OCI-LY7 (cell line): ENCODE measurements at regions of chr1 and their contacts with region 1.

Region 1: DNA sequence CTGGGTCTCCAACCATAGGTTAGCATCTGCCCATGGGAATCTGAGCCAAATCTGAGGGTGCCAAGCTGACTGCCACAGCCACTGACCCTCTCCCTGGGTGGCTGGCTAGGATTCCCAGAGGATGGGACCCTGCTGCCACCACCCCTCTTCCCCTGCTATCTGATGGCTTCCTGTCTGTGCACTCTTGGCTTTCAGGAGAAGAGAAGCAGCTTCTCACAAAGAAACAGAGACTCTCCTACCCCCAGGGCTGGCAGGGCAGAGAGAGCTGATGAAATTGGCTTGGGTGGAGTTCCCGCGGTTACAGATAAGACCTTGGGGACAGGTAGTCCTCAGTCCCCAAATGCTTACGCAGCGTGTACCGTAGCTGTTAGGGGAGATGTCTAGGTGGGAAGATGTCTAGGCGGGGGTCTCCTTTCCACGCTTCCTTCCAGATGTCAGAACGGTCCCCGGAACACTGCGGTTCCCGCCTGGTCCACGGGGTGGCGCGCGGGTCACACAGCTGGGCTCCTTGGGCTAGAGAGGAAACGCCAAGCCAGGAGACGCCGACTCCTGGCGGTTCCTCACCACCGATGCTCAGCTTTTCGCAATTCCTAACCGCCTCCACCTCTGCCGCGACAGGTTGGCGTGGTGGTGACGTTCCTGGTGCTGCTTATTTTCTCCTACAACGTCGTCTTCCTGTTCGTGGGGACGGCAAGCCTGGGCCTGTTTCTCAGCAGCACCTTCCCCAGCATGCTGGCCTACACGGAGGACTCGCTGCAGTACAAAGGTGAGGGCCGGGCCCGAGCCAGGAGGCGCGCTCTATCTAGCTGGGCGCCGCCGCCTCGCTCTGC is 40.1 kb downstream of the ELK4 start:
- DNase-seq: peak; percentile 88
- H3K4me3 ChIP-seq: peak overlapping the region; percentile 66
- H3K27ac ChIP-seq: peak overlapping the region; percentile 93
- H3K4me1 ChIP-seq: peaks cover 65% of the 10 kb centered on the region
- CTCF ChIP-seq: peak; percentile 96

Region 2: GRCh38 chr1:205344066-205344928 is 247.4 kb before region 1 on chr1:
- CTCF ChIA-PET with region 1: no interaction called
- POLR2A ChIA-PET with region 1: no interaction called
- intact Hi-C with region 1: no loop called
- DNase-seq: no peak
- H3K4me3 ChIP-seq: no peak overlapping the region
- H3K27ac ChIP-seq: no peak overlapping the region
- H3K4me1 ChIP-seq: peaks cover 17% of the 10 kb centered on the region
- CTCF ChIP-seq: no peak

Region 3: DNA sequence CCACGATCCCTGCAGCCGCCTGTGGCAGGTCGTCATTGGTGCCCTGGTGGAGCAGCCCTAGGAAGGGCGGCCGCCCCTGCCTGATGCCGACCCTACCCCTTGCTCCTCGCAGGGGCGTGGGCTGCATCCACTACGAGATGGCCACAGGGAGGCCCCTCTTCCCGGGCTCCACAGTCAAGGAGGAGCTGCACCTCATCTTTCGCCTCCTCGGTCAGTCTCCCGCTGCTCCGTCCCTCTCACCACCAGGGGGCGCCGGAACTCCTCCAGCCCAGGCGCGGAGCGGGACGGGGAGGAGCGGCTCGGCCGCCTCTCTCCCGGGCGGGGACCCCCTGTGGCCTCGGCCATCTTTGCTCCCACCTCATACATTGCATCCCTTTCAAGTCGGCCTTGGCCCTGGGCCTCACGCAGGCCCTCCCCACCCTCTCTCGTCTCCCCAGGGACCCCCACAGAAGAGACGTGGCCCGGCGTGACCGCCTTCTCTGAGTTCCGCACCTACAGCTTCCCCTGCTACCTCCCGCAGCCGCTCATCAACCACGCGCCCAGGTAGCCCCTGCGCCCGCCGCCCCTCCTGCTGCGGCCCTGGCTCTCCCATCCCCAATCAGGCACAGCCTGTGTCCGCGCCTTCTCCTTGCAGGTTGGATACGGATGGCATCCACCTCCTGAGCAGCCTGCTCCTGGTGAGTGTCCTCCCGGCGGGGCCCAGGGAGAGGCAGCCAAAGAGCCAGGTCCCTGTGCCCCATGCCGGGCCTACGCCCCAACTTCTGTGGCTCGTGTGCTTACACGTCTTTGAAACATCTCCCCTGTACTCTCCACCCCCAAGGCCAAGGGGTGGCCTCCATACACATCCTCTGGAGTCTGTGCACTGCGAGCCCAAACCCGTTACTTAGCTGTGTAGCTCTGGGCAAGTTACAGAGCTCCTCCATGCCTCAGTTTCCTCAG is 62.6 kb before region 1 on chr1:
- CTCF ChIA-PET with region 1: interaction called, 4 read pairs
- POLR2A ChIA-PET with region 1: no interaction called
- intact Hi-C with region 1: loop called (anchors 5 kb)
- DNase-seq: peak; percentile 82
- H3K4me3 ChIP-seq: peak overlapping the region; percentile 50
- H3K27ac ChIP-seq: no peak overlapping the region
- H3K4me1 ChIP-seq: no peaks in the 10 kb centered on the region
- CTCF ChIP-seq: peak; percentile 87

Region 4: GRCh38 chr1:205610036-205610435 is 18.3 kb after region 1 on chr1:
- CTCF ChIA-PET with region 1: no interaction called
- POLR2A ChIA-PET with region 1: interaction called, 12 read pairs
- intact Hi-C with region 1: no loop called
- DNase-seq: no peak
- H3K4me3 ChIP-seq: no peak overlapping the region
- H3K27ac ChIP-seq: no peak overlapping the region
- H3K4me1 ChIP-seq: peaks cover 22% of the 10 kb centered on the region
- CTCF ChIP-seq: no peak

Region 5: DNA sequence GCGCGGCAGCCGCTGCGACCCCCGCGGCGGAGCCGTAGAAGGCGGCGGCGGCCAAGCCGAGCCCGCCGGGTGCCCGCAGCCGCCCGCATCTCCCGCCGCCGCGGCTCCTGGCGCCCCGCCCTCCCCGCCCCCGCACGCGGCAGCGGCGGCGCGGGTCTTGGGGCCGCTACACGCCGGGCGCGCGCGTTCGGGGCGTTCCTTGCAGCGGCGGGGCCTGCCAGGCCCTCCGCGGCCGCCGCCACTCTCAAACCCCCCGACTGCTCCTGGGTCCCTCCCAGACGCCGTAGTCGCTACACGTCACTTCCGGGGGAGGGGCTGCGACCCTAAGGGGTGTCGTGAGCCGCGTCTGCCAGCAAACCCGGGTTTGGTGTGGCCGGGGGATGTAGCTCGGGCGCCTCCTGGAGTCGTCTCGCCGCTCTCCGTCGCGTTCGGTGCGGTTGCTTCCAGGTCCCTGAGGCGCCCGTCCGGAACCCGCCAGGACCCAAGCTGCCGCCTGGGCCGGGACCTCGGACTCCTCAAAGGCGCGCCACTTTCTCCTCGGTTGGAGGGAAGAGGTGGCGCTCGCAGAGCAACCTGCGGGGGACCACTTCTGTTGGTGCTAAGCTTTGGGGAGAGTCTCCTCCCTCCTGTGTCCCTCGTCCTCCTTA is 40.1 kb after region 1 on chr1 and contains the start of gene ELK4:
- CTCF ChIA-PET with region 1: interaction called, 41 read pairs
- POLR2A ChIA-PET with region 1: interaction called, 183 read pairs
- intact Hi-C with region 1: loop called (anchors 1 kb)
- DNase-seq: peak; percentile 99
- H3K4me3 ChIP-seq: peak within 1 kb of the TSS; percentile 92
- H3K27ac ChIP-seq: peak within 1 kb of the TSS; percentile 93
- H3K4me1 ChIP-seq: peaks cover 35% of the 10 kb centered on the region
- CTCF ChIP-seq: peak; percentile 78
- total RNA-seq, gene ELK4: 26.4 and 29.1 TPM in 2 replicates

Region 6: DNA sequence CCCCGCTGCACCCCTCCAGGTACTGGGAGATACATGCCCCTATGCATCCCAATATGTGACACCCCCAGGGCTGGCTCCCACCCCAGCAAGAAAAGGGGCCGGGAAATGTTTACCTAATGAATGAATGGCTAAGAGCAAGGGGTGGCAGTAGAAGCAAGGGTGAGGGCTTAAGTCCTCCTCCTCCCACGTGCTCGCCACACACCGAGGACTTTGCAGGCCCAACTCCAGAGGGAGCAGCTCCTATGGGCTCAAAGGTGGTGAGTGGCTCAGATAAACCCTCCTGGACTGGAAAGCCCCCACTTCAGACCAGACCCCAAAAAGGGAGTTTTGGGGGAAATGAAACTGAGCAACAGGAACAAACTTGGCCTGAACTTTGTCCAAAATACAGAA is 77.2 kb after region 1 on chr1:
- CTCF ChIA-PET with region 1: interaction called, 6 read pairs
- POLR2A ChIA-PET with region 1: interaction called, 31 read pairs
- intact Hi-C with region 1: no loop called
- DNase-seq: peak; percentile 61
- H3K4me3 ChIP-seq: peak overlapping the region; percentile 55
- H3K27ac ChIP-seq: peak overlapping the region; percentile 35
- H3K4me1 ChIP-seq: peaks cover 87% of the 10 kb centered on the region
- CTCF ChIP-seq: peak; percentile 47; the same call in 1 of the 2 replicates

Region 7: GRCh38 chr1:205711104-205712020 is 119.6 kb after region 1 on chr1:
- CTCF ChIA-PET with region 1: interaction called, 3 read pairs
- POLR2A ChIA-PET with region 1: interaction called, 3 read pairs
- intact Hi-C with region 1: loop called (anchors 2 kb)
- DNase-seq: peak; percentile 87
- H3K4me3 ChIP-seq: no peak overlapping the region
- H3K27ac ChIP-seq: peak overlapping the region; percentile 10
- H3K4me1 ChIP-seq: peaks cover 10% of the 10 kb centered on the region
- CTCF ChIP-seq: peak; percentile 99

Region 8: GRCh38 chr1:205756552-205756951 is 164.8 kb after region 1 on chr1:
- CTCF ChIA-PET with region 1: no interaction called
- POLR2A ChIA-PET with region 1: no interaction called
- intact Hi-C with region 1: no loop called
- DNase-seq: no peak
- H3K4me3 ChIP-seq: no peak overlapping the region
- H3K27ac ChIP-seq: no peak overlapping the region
- H3K4me1 ChIP-seq: no peaks in the 10 kb centered on the region
- CTCF ChIP-seq: no peak